BJ (cell line): ENCODE measurements at regions of chr15 and their contacts with region 1.

Region 1: GRCh38 chr15:60326824-60327654 is 70.7 kb downstream of the ANXA2 start:
- DNase-seq: no peak
- H3K4me3 ChIP-seq: no peak overlapping the region
- H3K27me3 ChIP-seq: peaks cover 25% of the 10 kb centered on the region
- CTCF ChIP-seq: peak; percentile 82

Region 2: GRCh38 chr15:59711451-59712243 is 615.4 kb before region 1 on chr15:
- CTCF ChIA-PET with region 1: interaction called, 14 read pairs
- POLR2A ChIA-PET with region 1: no interaction called
- DNase-seq: no peak
- H3K4me3 ChIP-seq: no peak overlapping the region
- H3K27me3 ChIP-seq: 0 out of 2 replicates have a peak, but pooled peaks cover 1% of the 10 kb centered on the region
- CTCF ChIP-seq: no peak

Region 3: DNA sequence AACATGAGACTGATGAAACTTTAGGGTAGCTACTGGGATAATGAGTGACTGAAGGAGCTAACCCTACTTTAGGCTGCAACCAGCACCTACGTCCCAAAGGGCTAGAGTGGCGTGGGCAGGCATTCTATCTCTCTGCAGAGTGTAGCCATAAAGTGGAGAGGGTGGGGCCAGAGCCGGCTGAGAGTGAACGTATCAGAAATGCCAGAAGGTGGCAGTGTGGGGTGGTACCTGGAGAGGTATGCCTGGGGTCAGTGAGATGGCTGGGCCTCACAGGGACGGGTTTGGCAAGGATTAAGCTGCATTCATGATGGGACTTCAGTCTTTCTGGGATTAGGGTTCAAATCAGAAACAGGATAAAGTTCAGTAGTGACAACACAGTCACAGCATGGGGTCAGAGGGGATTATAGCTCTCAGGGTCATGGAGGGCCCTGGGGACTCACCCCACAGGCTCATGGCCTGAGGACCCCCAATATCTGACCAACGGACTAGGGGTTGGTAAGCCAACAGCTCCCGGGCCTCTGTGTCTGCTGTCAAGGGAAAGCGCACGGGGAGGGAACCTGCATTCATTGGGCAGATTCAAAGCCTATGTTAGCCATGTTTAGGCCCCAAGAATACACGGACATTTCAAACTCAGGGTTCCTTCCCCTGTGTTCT is 409.4 kb before region 1 on chr15:
- CTCF ChIA-PET with region 1: interaction called, 13 read pairs
- POLR2A ChIA-PET with region 1: no interaction called
- DNase-seq: no peak
- H3K4me3 ChIP-seq: no peak overlapping the region
- H3K27me3 ChIP-seq: no peaks in the 10 kb centered on the region
- CTCF ChIP-seq: peak; percentile 45

Region 4: GRCh38 chr15:60091165-60091564 is 235.9 kb before region 1 on chr15:
- CTCF ChIA-PET with region 1: no interaction called
- POLR2A ChIA-PET with region 1: no interaction called
- DNase-seq: peak; percentile 30
- H3K4me3 ChIP-seq: no peak overlapping the region
- H3K27me3 ChIP-seq: peaks cover 4% of the 10 kb centered on the region; the same call in 1 of the 2 replicates
- CTCF ChIP-seq: no peak

Region 5: DNA sequence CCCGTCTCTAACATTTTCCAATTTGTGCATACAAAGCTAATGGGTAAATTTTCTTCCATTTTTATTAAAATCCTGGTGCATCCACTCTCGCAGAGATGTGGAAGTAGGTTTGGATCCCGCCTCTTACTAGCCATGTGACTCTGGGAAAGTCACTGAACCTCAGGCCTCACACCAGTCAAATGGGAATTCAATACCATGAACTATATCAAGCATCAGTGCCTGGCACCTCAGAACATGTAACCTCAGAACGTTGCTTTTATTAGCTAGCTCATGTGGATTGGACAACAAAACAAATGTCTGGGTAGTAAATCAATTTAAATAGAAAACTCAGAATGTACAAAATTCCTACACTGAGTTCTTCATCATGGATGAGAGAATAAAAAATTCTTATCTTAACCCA is 10.0 kb after region 1 on chr15:
- CTCF ChIA-PET with region 1: interaction called, 12 read pairs
- POLR2A ChIA-PET with region 1: no interaction called
- DNase-seq: no peak
- H3K4me3 ChIP-seq: no peak overlapping the region
- H3K27me3 ChIP-seq: no peaks in the 10 kb centered on the region
- CTCF ChIP-seq: no peak

Region 6: GRCh38 chr15:60520825-60521368 is 193.9 kb after region 1 on chr15:
- CTCF ChIA-PET with region 1: interaction called, 16 read pairs
- POLR2A ChIA-PET with region 1: no interaction called
- DNase-seq: no peak
- H3K4me3 ChIP-seq: no peak overlapping the region
- H3K27me3 ChIP-seq: no peaks in the 10 kb centered on the region
- CTCF ChIP-seq: peak; percentile 88